Activated CD4-positive, alpha-beta T cell treated with anti-CD3 and anti-CD28 coated beads for 36 hours (primary cell): ENCODE measurements at regions of chr2 and their contacts with region 1.

Region 1: GRCh38 chr2:156435715-156436496 is at the start of gene GPD2:
- DNase-seq: peak; percentile 72
- ATAC-seq: peak; percentile 74
- H3K4me3 Mint-ChIP-seq: peak within 1 kb of the TSS; percentile 87
- H3K27ac Mint-ChIP-seq: peak within 1 kb of the TSS; percentile 96
- H3K4me1 Mint-ChIP-seq: peaks cover 25% of the 10 kb centered on the region
- H3K27me3 Mint-ChIP-seq: no peaks in the 10 kb centered on the region
- total RNA-seq, gene GPD2: 31.6 to 32.6 TPM

Region 2: GRCh38 chr2:156341452-156342253 is 94.3 kb before region 1 on chr2:
- CTCF ChIA-PET with region 1: no interaction called
- POLR2A ChIA-PET with region 1: no interaction called
- intact Hi-C with region 1: loop called (anchors 1 to 2 kb)
- DNase-seq: peak; percentile 94
- ATAC-seq: peak; percentile 79
- H3K4me3 Mint-ChIP-seq: peak overlapping the region; percentile 84
- H3K27ac Mint-ChIP-seq: peak overlapping the region; percentile 95
- H3K4me1 Mint-ChIP-seq: peaks cover 53% of the 10 kb centered on the region
- H3K27me3 Mint-ChIP-seq: no peaks in the 10 kb centered on the region

Region 3: DNA sequence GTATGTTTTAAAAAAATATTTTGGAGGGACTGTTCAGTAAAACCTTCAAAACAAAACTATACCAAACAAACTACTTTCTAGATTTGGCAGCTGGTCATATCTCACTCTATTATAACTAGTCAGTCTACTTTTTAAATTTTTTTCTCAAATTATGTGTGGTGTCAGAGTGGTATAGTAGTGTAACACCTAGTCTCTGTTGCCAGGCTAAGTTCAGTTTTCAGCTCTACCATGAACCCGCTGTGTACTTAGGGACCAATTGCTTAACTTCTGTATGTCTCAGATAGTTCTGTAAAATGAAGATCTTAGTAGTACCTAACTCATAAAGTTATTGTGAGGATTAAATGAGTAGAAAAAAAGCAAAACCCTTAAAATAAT is 54.5 kb after region 1 on chr2:
- CTCF ChIA-PET with region 1: no interaction called
- POLR2A ChIA-PET with region 1: no interaction called
- intact Hi-C with region 1: loop called in 1 of 2 experiments (anchors 5 kb)
- DNase-seq: no peak
- ATAC-seq: peak; percentile 70
- H3K4me3 Mint-ChIP-seq: no peak overlapping the region
- H3K27ac Mint-ChIP-seq: peak overlapping the region; percentile 5
- H3K4me1 Mint-ChIP-seq: peaks cover 46% of the 10 kb centered on the region
- H3K27me3 Mint-ChIP-seq: no peaks in the 10 kb centered on the region

Region 4: DNA sequence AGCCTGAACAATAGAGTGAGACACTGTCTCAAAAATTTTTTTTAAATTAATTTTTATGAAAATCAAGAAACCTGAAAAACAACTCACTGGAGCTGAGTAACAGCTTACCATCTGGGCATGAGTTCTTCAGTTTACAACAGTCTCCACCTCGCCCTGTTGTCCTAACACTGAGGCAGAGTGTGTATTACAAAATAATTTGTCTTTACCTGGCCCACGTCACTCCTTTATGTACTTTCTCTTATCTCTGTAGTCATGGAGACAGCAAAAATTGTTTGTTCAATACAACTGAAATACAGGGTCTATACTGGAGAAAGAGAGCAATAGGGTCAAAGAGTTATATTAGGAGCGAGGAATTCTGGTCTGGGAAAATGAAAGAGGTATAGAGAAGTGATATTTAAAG is 959.9 kb after region 1 on chr2:
- CTCF ChIA-PET with region 1: no interaction called
- POLR2A ChIA-PET with region 1: no interaction called
- intact Hi-C with region 1: loop called in 1 of 2 experiments (anchors 5 kb)
- DNase-seq: no peak
- ATAC-seq: no peak
- H3K4me3 Mint-ChIP-seq: no peak overlapping the region
- H3K27ac Mint-ChIP-seq: no peak overlapping the region
- H3K4me1 Mint-ChIP-seq: peaks cover 7% of the 10 kb centered on the region
- H3K27me3 Mint-ChIP-seq: no peaks in the 10 kb centered on the region